AG04449 (cell line): ENCODE measurements at regions of chr5 and their contacts with region 1.

Region 1: GRCh38 chr5:6745706-6746222 is 32.5 kb downstream of the TENT4A start:
- DNase-seq: no peak
- H3K4me3 ChIP-seq: no peak overlapping the region
- CTCF ChIP-seq: peak; percentile 70

Region 2: GRCh38 chr5:6623941-6624340 is 121.8 kb before region 1 on chr5:
- CTCF ChIA-PET with region 1: interaction called, 81 read pairs
- POLR2A ChIA-PET with region 1: no interaction called
- DNase-seq: no peak
- H3K4me3 ChIP-seq: no peak overlapping the region
- CTCF ChIP-seq: no peak

Region 3: DNA sequence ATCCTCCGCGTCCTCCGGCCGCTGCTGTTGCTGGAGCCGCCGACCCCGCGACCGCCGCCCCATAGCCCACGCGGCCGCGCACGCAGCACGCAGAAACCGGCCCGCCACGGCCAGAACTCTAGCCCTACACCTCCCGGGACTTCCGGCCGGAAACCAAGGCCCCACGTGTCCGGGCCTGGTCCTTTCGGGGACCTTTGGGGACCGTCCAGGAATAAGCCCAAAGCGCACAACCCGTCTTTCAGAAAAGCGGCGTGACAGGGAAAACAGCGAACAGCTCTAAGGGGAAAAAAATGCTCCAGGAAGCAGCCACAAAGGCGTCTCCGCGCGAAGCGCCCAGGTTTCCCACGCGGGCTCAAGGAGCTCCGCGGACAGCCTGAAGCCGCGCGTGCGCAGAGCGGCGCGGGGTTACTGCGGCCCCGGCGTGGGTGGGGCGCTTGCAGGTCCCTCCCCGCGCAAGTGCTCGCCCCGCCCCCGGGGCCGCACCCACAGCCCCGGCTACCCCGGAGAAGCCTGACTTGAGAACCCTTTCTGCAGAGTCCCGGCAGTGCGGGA is 112.8 kb before region 1 on chr5 and contains the starts of genes NSUN2 and SRD5A1:
- CTCF ChIA-PET with region 1: interaction called, 81 read pairs
- POLR2A ChIA-PET with region 1: interaction called, 3 read pairs
- DNase-seq: peak; percentile 42
- H3K4me3 ChIP-seq: peak within 1 kb of the TSS; percentile 67
- CTCF ChIP-seq: no peak

Region 4: DNA sequence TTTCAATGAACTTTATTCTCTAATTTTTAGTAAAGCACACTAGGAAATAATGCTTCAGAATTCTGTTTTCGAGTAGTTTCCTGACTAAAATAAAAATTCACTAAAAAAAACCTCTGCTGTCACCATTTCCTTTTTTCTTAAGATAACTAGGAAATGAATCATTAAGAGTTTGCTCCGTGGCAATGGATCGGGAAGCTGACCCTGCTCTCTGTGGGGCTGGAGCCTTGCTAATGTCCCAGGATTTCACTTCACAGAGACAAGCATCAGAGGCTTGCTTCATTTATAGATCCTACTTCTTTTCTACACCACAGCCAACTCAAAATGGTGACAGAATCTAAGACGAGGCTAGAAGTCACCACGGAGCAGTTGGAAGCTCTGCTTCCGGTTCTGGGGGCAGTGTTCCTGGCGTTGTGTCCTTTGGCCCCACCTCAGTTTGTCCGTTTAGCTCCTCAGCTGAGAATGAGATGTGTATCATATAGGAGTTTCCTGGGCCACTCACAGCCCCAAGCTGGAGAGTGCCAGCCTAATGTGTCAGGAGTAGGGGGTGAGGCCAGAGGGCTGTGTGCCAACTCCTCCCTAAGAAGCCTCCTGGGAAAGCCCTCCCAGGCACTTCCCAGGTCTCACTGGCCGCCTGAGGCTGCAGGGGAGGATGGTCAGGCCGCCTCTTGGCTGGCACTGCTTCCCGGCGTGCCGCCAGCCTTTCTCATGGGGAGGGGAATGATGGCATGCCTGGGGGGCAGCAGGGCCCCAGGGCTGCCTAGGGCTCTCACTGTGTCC is 12.9 kb before region 1 on chr5:
- CTCF ChIA-PET with region 1: interaction called, 31 read pairs
- POLR2A ChIA-PET with region 1: interaction called, 3 read pairs
- DNase-seq: no peak
- H3K4me3 ChIP-seq: peak overlapping the region; percentile 16; the same call in 1 of the 2 replicates
- CTCF ChIP-seq: no peak

Region 5: GRCh38 chr5:6886866-6887265 is 141.1 kb after region 1 on chr5:
- CTCF ChIA-PET with region 1: no interaction called
- POLR2A ChIA-PET with region 1: no interaction called
- DNase-seq: no peak
- H3K4me3 ChIP-seq: no peak overlapping the region
- CTCF ChIP-seq: no peak

Region 6: GRCh38 chr5:6979061-6979460 is 233.3 kb after region 1 on chr5:
- CTCF ChIA-PET with region 1: no interaction called
- POLR2A ChIA-PET with region 1: no interaction called
- DNase-seq: no peak
- H3K4me3 ChIP-seq: no peak overlapping the region
- CTCF ChIP-seq: no peak